ENCODE measurements at regions of chr19 and their contacts with region 1.

Region 1: DNA sequence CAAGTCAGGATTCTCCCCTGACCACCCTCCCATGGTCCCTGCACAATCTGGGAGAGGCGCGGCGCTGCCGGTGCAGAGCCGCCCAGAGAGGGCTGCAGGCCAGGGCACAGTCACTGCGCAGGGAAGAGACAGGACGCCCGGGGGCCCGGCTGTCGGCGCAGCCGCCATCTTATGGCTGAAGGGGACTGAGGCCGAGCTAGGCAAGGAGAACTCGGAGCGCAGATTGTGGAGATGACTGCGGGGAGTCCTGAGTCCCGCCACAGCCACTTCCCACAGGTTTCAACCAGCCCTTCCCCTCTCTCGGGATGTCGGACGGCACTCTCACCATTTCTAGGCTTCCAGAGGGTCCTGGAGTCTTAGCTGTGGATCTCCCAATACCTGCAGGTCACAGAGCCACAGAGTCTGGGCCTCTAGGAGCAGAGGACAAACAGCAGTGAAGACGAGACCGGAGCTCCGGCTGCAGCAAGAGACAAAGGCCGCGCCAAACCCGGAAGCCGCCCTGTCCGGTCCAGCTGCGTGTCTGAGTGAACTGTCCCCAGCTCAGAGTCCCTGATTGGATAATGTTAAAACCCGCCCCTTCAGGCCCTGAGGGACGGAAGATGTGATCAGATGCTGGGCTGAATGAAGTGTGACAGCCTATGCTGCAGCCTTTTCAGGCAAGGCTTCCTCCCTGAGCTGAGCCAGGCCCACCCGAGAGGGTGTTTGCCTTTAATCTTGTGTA is at the start of gene ZNF708:
- DNase-seq: peak; percentile 42 to 80 (median 71)
- ATAC-seq: peak; percentile 99
- H3K4me3 ChIP-seq: peak within 1 kb of the TSS; percentile 94
- H3K4me3 Mint-ChIP-seq: peak within 1 kb of the TSS; percentile 93 to 99 (median 97)
- H3K27ac ChIP-seq: peak within 1 kb of the TSS; percentile 92
- H3K27ac Mint-ChIP-seq: peak within 1 kb of the TSS; percentile 96 to 100 (median 99)
- H3K4me1 ChIP-seq: peaks cover 6 to 14% of the 10 kb centered on the region in 2 donors
- H3K4me1 Mint-ChIP-seq: peaks cover 24 to 47% (median 31%) of the 10 kb centered on the region in 7 donors
- H3K27me3 ChIP-seq: no peaks in the 10 kb centered on the region
- H3K27me3 Mint-ChIP-seq: no peaks in the 10 kb centered on the region
- total RNA-seq, gene ZNF708: 21.2 to 48.0 (median 24.2) TPM

Region 2: DNA sequence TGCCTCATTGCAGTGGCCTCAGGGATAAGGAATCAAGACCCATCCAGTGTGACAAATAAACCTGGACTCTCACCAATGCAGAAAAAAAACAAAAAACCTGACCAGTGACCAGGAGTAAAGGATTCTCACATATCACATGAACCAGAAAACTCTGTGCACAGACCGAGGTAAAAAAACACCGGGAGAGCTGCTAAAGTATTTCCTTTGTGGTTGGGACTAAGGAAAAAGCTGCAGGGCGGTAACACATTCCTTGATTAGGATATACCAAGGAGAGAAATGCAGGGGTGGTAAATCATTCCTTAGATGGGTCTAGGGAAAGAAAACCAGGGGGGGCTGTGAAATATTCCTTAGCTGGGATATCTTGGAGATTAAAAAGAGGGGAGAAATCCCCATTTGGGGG is 470.8 kb before region 1 on chr19:
- CTCF ChIA-PET with region 1: no interaction called
- POLR2A ChIA-PET with region 1: no interaction called
- intact Hi-C with region 1: no loop called
- DNase-seq: no peak
- ATAC-seq: no peak
- H3K4me3 ChIP-seq: no peak overlapping the region
- H3K4me3 Mint-ChIP-seq: no peak overlapping the region
- H3K27ac ChIP-seq: no peak overlapping the region
- H3K27ac Mint-ChIP-seq: no peak overlapping the region
- H3K4me1 ChIP-seq: no peaks in the 10 kb centered on the region
- H3K4me1 Mint-ChIP-seq: no peaks in the 10 kb centered on the region
- H3K27me3 ChIP-seq: no peaks in the 10 kb centered on the region
- H3K27me3 Mint-ChIP-seq: no peaks in the 10 kb centered on the region

Region 3: GRCh38 chr19:21141787-21142464 is 187.1 kb before region 1 on chr19 and contains the start of gene ZNF431:
- CTCF ChIA-PET with region 1: no interaction called
- POLR2A ChIA-PET with region 1: interaction called, 13 read pairs
- intact Hi-C with region 1: loop called in 1 of 2 experiments (anchors 2 kb)
- DNase-seq: peak; percentile 63 to 95 (median 91)
- ATAC-seq: peak; percentile 100
- H3K4me3 ChIP-seq: peak within 1 kb of the TSS; percentile 94
- H3K4me3 Mint-ChIP-seq: peak within 1 kb of the TSS; percentile 95 to 98 (median 97)
- H3K27ac ChIP-seq: peak within 1 kb of the TSS; percentile 91
- H3K27ac Mint-ChIP-seq: peak within 1 kb of the TSS; percentile 93 to 99 (median 96)
- H3K4me1 ChIP-seq: peaks cover 3 to 6% of the 10 kb centered on the region in 2 donors
- H3K4me1 Mint-ChIP-seq: peaks cover 20 to 69% (median 54%) of the 10 kb centered on the region in 7 donors
- H3K27me3 ChIP-seq: no peaks in the 10 kb centered on the region
- H3K27me3 Mint-ChIP-seq: no peaks in the 10 kb centered on the region
- total RNA-seq, gene ZNF431: 19.1 to 36.8 (median 25.4) TPM

Region 4: DNA sequence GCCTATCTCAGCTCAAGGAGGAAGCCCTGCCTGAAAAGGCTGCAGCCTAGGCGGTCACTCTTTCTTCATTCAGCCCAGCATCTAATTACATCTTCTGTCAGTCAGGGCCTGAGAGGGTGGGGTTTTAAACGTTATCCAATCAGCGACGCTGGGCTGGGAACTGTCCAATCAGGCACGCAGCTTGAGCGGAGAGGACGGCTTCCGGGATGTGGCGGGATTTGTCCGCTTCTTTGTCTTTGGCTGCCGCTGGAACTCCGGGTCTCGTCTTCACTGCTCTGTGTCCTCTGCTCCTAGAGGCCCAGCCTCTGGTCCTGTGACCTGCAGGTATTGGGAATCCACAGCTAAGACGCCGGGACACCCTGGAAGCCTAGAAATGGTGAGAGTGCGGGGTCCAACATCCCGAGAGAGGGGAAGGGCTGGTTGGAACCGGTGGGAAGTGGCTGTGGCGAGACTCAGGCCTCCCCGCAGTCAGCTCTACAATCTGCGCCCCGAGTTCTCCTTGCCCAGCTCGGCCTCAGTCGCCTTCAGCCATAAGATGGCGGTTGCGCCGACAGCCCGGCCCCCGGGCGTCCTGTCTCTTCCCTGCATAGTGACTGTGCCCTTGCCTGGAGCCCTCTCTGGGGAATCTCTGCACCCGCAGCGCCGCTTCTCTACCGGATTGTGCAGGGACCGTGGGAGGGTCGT is 29.9 kb after region 1 on chr19 and contains the start of gene ZNF738:
- CTCF ChIA-PET with region 1: interaction called, 4 read pairs
- POLR2A ChIA-PET with region 1: interaction called, 20 read pairs
- intact Hi-C with region 1: loop called (anchors 1 kb)
- DNase-seq: peak; percentile 59 to 87 (median 76)
- ATAC-seq: peak; percentile 98
- H3K4me3 ChIP-seq: peak within 1 kb of the TSS; percentile 98
- H3K4me3 Mint-ChIP-seq: peak within 1 kb of the TSS; percentile 93 to 99 (median 98)
- H3K27ac ChIP-seq: peak within 1 kb of the TSS; percentile 77
- H3K27ac Mint-ChIP-seq: peak within 1 kb of the TSS; percentile 85 to 98 (median 91)
- H3K4me1 ChIP-seq: peaks cover 0 to 6% of the 10 kb centered on the region in 2 donors
- H3K4me1 Mint-ChIP-seq: peaks cover 6 to 17% (median 14%) of the 10 kb centered on the region in 7 donors
- H3K27me3 ChIP-seq: no peaks in the 10 kb centered on the region
- H3K27me3 Mint-ChIP-seq: no peaks in the 10 kb centered on the region
- total RNA-seq, gene ZNF738: 6.4 to 11.4 (median 9.8) TPM

Region 5: GRCh38 chr19:21474671-21475181 is 145.7 kb after region 1 on chr19:
- CTCF ChIA-PET with region 1: no interaction called
- POLR2A ChIA-PET with region 1: no interaction called
- intact Hi-C with region 1: loop called in 1 of 2 experiments (anchors 5 kb)
- DNase-seq: peak in 8 of 9 donors; percentile 55 to 82 (median 70)
- ATAC-seq: peak; percentile 99
- H3K4me3 ChIP-seq: peak overlapping the region; percentile 37
- H3K4me3 Mint-ChIP-seq: peak overlapping the region in 9 of 10 donors; percentile 32 to 75 (median 68)
- H3K27ac ChIP-seq: no peak overlapping the region
- H3K27ac Mint-ChIP-seq: peak overlapping the region in 2 of 9 donors; percentile 25 to 55
- H3K4me1 ChIP-seq: peaks cover 0 to 7% of the 10 kb centered on the region in 2 donors
- H3K4me1 Mint-ChIP-seq: peaks cover 0 to 11% (median 3%) of the 10 kb centered on the region in 7 donors
- H3K27me3 ChIP-seq: no peaks in the 10 kb centered on the region
- H3K27me3 Mint-ChIP-seq: peaks cover 0 to 16% (median 7%) of the 10 kb centered on the region in 5 donors

Region 6: DNA sequence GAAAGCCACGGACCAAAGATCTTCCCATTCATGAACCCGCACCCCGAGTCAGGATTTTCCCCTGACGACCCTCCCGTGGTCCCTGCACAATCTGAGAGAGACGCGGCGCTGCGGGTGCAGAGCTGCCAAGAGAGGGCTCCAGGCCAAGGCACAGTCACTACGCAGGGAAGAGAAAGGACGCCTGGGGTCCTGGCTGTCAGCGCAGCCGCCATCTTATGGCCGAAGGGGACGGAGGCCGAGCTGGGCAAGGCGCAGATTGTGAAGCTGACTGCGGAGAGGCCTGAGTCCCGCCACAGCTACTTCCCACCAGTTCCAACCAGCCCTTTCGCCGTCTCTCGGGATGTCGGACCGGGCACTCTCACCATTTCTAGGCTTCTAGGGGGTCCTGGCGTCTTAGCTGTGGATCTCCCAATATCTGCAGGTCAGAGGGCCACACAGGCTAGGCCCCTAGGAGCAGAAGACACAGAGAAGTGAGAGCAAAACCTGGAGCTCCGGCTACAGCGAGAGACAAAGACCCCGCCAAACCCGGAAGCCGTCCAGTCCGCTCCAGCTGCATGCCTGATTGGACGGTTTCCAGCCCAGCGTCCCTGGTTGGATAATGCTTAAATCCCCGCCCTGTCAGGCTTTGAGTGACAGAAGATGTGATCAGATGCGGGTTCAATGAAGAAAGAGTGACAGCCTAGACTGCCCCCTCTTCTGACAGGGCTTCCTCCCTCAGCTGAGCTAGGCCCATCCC is 438.2 kb after region 1 on chr19 and contains the start of gene ZNF100:
- CTCF ChIA-PET with region 1: no interaction called
- POLR2A ChIA-PET with region 1: interaction called, 3 read pairs
- intact Hi-C with region 1: loop called in 1 of 2 experiments (anchors 1 kb)
- DNase-seq: peak; percentile 64 to 88 (median 80)
- ATAC-seq: peak; percentile 98
- H3K4me3 ChIP-seq: peak within 1 kb of the TSS; percentile 97
- H3K4me3 Mint-ChIP-seq: peak within 1 kb of the TSS; percentile 92 to 98 (median 97)
- H3K27ac ChIP-seq: peak within 1 kb of the TSS; percentile 81
- H3K27ac Mint-ChIP-seq: peak within 1 kb of the TSS; percentile 89 to 98 (median 92)
- H3K4me1 ChIP-seq: no peaks in the 10 kb centered on the region
- H3K4me1 Mint-ChIP-seq: peaks cover 7 to 43% (median 27%) of the 10 kb centered on the region in 7 donors
- H3K27me3 ChIP-seq: no peaks in the 10 kb centered on the region
- H3K27me3 Mint-ChIP-seq: no peaks in the 10 kb centered on the region
- total RNA-seq, gene ZNF100: 9.5 to 22.5 (median 18.4) TPM

Measured in naive thymus-derived CD4-positive, alpha-beta T cell (primary cell).